ENCODE measurements at regions of chr6 and their contacts with region 1.

Region 1: GRCh38 chr6:134979142-134979541 is 29.2 kb upstream of the ALDH8A1 start:
- DNase-seq: peak; percentile 72
- H3K4me3 Mint-ChIP-seq: no peak overlapping the region
- H3K27ac Mint-ChIP-seq: peak overlapping the region; percentile 33
- H3K4me1 Mint-ChIP-seq: peaks cover 42% of the 10 kb centered on the region
- H3K27me3 Mint-ChIP-seq: no peaks in the 10 kb centered on the region

Region 2: GRCh38 chr6:135014353-135014832 is 35.3 kb after region 1 on chr6:
- CTCF ChIA-PET with region 1: no interaction called
- intact Hi-C with region 1: loop called (anchors 1 kb)
- DNase-seq: peak; percentile 24
- H3K4me3 Mint-ChIP-seq: peak overlapping the region; percentile 2
- H3K27ac Mint-ChIP-seq: no peak overlapping the region
- H3K4me1 Mint-ChIP-seq: peaks cover 60% of the 10 kb centered on the region
- H3K27me3 Mint-ChIP-seq: no peaks in the 10 kb centered on the region

Region 3: GRCh38 chr6:135030056-135030473 is 50.9 kb after region 1 on chr6:
- CTCF ChIA-PET with region 1: no interaction called
- intact Hi-C with region 1: loop called (anchors 1 kb)
- DNase-seq: peak; percentile 18
- H3K4me3 Mint-ChIP-seq: peak overlapping the region; percentile 10
- H3K27ac Mint-ChIP-seq: peak overlapping the region; percentile 71
- H3K4me1 Mint-ChIP-seq: peaks cover 63% of the 10 kb centered on the region
- H3K27me3 Mint-ChIP-seq: no peaks in the 10 kb centered on the region

Region 4: GRCh38 chr6:135114355-135115145 is 135.4 kb after region 1 on chr6:
- CTCF ChIA-PET with region 1: no interaction called
- intact Hi-C with region 1: loop called (anchors 1 kb)
- DNase-seq: peak; percentile 75
- H3K4me3 Mint-ChIP-seq: no peak overlapping the region
- H3K27ac Mint-ChIP-seq: peak overlapping the region; percentile 74
- H3K4me1 Mint-ChIP-seq: peaks cover 72% of the 10 kb centered on the region
- H3K27me3 Mint-ChIP-seq: no peaks in the 10 kb centered on the region

Region 5: DNA sequence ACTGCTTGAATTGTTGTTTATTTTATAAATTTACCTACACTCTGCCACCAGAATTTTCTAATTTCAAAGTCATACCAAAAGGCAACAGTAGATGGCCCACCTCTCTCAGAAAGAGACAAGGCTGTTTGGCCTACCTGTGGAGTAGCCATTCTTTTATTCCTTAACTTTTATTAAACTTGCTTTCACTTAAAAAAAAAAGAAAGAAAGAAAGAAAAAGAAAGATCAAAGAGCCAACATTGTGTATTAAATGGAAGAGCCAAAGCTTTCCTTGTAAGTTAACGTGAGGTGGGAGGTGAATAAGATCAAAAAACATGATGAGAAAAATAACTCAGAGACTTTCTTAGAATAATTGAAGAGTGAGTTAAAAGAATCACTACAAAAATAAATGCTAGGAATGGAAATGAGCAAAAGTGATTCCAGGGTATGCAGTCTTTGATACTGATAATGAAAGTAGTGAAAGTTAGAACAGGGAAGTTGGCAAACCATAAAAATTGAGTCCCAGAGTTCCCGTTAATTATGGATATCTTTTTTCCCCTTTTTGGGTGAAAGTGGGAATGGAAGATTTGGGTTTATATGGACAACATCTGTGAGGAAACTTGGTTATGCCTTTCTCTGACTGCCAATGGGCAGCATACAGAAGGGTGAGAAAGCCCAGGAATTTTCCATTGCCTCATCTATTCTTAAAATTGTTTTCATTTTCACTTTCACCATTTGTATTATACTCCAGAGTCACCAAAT is 166.1 kb after region 1 on chr6:
- CTCF ChIA-PET with region 1: interaction called, 5 read pairs
- intact Hi-C with region 1: loop called (anchors 1 kb)
- DNase-seq: no peak
- H3K4me3 Mint-ChIP-seq: no peak overlapping the region
- H3K27ac Mint-ChIP-seq: peak overlapping the region; percentile 76
- H3K4me1 Mint-ChIP-seq: peaks cover 51% of the 10 kb centered on the region
- H3K27me3 Mint-ChIP-seq: no peaks in the 10 kb centered on the region

Region 6: GRCh38 chr6:135170849-135171248 is 191.7 kb after region 1 on chr6:
- CTCF ChIA-PET with region 1: no interaction called
- intact Hi-C with region 1: loop called (anchors 2 kb)
- DNase-seq: peak; percentile 65
- H3K4me3 Mint-ChIP-seq: no peak overlapping the region
- H3K27ac Mint-ChIP-seq: peak overlapping the region; percentile 88
- H3K4me1 Mint-ChIP-seq: peaks cover 17% of the 10 kb centered on the region
- H3K27me3 Mint-ChIP-seq: no peaks in the 10 kb centered on the region

Region 7: GRCh38 chr6:135191508-135192255 is 212.5 kb after region 1 on chr6:
- CTCF ChIA-PET with region 1: no interaction called
- intact Hi-C with region 1: no loop called
- DNase-seq: no peak
- H3K4me3 Mint-ChIP-seq: no peak overlapping the region
- H3K27ac Mint-ChIP-seq: no peak overlapping the region
- H3K4me1 Mint-ChIP-seq: peaks cover 12% of the 10 kb centered on the region
- H3K27me3 Mint-ChIP-seq: no peaks in the 10 kb centered on the region

Measured in activated naive CD4-positive, alpha-beta T cell treated with anti-CD3 and anti-CD28 coated beads for 36 hours (primary cell).